Sigmoid colon (tissue), 7 donors: ENCODE measurements at regions of chr20 and their contacts with region 1.

Region 1: DNA sequence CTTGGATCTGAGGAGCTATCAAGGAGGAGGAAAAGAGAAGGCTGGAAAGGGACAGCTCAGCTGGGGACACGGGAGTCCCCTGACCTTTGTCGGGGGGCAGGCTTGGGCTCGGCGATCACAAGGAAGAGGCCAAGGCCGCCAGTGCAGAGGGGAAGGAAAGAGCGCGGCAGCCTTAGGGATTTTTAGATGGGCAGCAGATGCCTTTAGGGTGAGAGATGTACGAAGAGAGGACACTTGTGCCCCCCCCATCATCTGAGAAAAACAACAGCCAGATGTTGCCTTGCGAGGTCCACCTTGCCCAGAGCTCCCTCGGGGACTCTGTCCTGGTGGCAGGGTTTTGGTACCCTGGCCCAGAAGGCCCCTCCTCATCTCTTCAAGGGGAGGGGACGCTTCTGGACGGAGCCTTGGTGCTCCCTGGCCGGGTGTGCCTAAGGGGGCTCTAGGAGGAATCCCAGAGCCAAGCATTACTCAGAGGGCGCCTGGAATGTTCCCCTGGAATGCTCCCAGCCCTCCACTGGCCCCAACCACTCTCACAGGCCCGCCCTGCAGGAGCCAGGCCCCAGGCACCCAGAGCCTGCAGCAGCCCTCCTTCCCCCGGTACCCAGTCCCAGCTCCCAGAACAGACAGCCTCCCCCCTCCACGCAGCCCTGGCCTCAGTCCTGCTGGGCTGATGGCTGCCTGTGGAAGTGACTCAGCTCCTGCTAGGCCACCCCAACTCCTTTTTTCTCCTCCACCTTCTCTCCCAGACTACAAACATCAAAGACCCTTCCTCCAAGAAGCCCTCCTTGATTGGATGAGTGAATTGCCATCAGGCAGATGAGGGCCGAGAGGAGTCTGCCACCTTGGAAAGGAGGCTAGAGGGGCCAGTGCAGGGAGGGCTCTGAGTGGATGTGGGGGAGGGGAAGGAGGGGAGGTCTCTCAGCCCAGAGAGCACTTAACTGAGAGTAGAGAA is 1.8 kb downstream of the ADAM33 start:
- DNase-seq: peak; percentile 94
- H3K4me3 ChIP-seq: peak overlapping the region; percentile 57 to 76 (median 70)
- H3K27ac ChIP-seq: peak overlapping the region; percentile 86 to 97 (median 94)
- H3K4me1 ChIP-seq: peaks cover 0 to 62% (median 57%) of the 10 kb centered on the region in 4 donors
- H3K27me3 ChIP-seq: no peaks in the 10 kb centered on the region
- CTCF ChIP-seq: no peak
- EP300 ChIP-seq: no peak
- POLR2A ChIP-seq: peak; percentile 23 to 52

Region 2: GRCh38 chr20:3767427-3768341 is 87.7 kb after region 1 on chr20 and contains the start of gene ADISSP:
- intact Hi-C with region 1: loop called (anchors 5 kb)
- DNase-seq: peak; percentile 100
- H3K4me3 ChIP-seq: peak within 1 kb of the TSS; percentile 78 to 92 (median 88)
- H3K27ac ChIP-seq: peak within 1 kb of the TSS; percentile 91 to 96 (median 92)
- H3K4me1 ChIP-seq: peaks cover 0 to 58% (median 52%) of the 10 kb centered on the region in 4 donors
- H3K27me3 ChIP-seq: no peaks in the 10 kb centered on the region
- CTCF ChIP-seq: no peak
- EP300 ChIP-seq: no peak
- POLR2A ChIP-seq: peak; percentile 12 to 51
- total RNA-seq, gene ADISSP: 53.2 to 116 (median 69.6) TPM

Region 3: DNA sequence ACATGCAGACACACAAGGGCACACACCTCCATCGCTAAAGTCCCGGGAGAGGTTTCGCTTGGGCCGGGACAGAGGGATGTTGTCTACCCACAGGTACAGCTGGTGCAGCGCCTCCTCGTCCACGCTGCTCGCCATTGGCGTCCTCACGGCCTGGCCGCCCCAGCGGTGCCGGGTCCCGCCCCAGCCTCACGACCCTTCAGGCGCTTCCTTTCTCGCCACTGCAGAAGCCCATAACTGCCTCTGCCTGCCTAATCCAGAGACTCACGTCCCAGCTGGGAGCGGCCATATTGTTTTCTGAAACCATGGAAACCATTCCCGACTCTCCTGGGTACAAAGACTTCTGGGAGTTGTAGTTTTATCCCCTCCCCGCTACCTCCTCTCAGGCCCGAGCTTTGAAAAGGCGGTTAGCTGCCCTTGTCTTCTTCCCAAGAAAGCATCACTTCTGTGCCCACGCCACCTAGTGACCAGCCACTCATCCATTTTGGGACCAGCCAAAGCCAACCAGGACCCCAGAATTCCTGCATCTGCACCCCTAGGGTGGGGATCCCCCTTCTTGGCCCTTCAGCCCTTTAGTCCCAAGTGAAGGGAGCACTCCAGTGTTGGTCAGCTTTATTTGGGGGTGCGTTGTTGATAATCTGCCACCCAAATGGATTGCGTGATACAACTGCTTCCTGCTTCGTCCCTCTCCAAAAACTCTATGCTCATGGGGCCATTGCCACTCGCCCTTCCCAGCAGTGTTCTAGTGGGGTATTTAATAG is 101.3 kb after region 1 on chr20 and contains the start of gene SPEF1:
- intact Hi-C with region 1: no loop called
- DNase-seq: peak; percentile 92
- H3K4me3 ChIP-seq: peak within 1 kb of the TSS in 3 of 4 donors; percentile 30 to 43 (median 41)
- H3K27ac ChIP-seq: peak within 1 kb of the TSS; percentile 43 to 65 (median 60)
- H3K4me1 ChIP-seq: peaks cover 0 to 64% (median 51%) of the 10 kb centered on the region in 4 donors
- H3K27me3 ChIP-seq: no peaks in the 10 kb centered on the region
- CTCF ChIP-seq: peak in 2 of 4 experiments; percentile 27 to 52
- EP300 ChIP-seq: no peak
- POLR2A ChIP-seq: no peak
- total RNA-seq, gene SPEF1: 0.81 TPM in 1 of 4 donors, not detected in the others